ENCODE measurements at regions of chr16 and their contacts with region 1.

Region 1: GRCh38 chr16:24010440-24011089 is 174.8 kb downstream of the PRKCB start:
- DNase-seq: peak; percentile 78

Region 2: GRCh38 chr16:23784811-23785447 is 225.6 kb before region 1 on chr16:
- in situ Hi-C with region 1: loop called (anchors 25 kb)
- DNase-seq: peak; percentile 13

Region 3: GRCh38 chr16:23842137-23842600 is 168.4 kb before region 1 on chr16:
- in situ Hi-C with region 1: no loop called
- DNase-seq: no peak

Region 4: GRCh38 chr16:24102209-24102660 is 91.7 kb after region 1 on chr16:
- in situ Hi-C with region 1: no loop called
- DNase-seq: no peak

Measured in ACHN (cell line).